ENCODE measurements at regions of chr16 and their contacts with region 1.

Region 1: GRCh38 chr16:87203060-87203656 is 114.0 kb downstream of the C16orf95 start:
- DNase-seq: peak; percentile 84 to 91
- ATAC-seq: peak; percentile 80 to 92
- H3K4me3 ChIP-seq: no peak overlapping the region
- H3K27ac ChIP-seq: peak overlapping the region in 1 of 2 experiments; percentile 69; a peak in 3 of 6 replicates
- H3K4me1 ChIP-seq: peaks cover 30% of the 10 kb centered on the region
- CTCF ChIP-seq: peak; percentile 92
- EP300 ChIP-seq: no peak
- POLR2A ChIP-seq: no peak
- RAD21 ChIP-seq: peak; percentile 73 to 74

Region 2: DNA sequence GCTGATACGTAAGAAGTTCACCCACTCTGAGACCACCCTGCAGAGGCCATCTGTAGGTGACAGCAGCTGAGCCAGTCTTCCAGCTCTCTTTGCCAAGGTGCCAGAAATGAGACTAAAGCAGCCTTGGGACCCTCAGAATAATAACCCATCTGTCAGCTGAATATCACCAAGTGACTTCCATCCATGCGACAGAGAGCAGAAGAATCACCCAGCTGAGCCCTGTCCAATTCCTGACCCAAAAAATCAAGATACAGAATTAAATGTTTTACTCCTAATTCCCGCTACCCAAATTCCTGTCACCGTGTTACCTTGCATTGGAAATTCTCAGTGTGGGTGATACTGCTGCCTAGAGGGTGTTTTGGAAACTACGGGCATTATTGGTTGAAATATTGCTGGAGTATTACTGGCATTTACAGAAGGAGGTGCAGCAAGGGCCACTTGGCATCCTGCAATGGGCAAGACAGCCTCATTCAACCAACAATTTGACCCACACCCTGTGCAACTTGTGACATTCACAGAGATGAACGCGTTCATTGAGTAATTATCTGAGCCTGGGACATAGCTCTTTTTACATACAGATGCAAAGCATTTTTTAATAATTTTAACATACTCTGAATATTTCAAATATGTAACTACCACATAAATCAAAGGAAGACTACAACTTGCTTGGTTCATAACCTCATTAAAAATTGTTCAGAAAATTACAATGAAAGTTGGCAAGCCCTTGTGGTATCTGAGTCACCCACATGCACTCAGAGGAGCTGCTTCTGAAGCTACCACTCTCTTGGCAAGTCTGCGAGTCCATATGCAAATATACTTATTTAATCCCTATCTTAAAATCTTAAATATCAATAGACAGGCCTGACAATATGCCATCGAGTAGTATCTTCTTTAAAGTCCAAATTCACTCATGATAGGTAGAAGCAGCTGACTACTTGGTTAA is 12.6 kb before region 1 on chr16:
- CTCF ChIA-PET with region 1: interaction called, 14 read pairs
- POLR2A ChIA-PET with region 1: no interaction called
- DNase-seq: no peak
- ATAC-seq: no peak
- H3K4me3 ChIP-seq: no peak overlapping the region
- H3K27ac ChIP-seq: no peak overlapping the region
- H3K4me1 ChIP-seq: no peaks in the 10 kb centered on the region
- CTCF ChIP-seq: no peak
- EP300 ChIP-seq: no peak
- POLR2A ChIP-seq: no peak
- RAD21 ChIP-seq: no peak

Region 3: GRCh38 chr16:87288753-87289362 is 85.7 kb after region 1 on chr16:
- CTCF ChIA-PET with region 1: interaction called, 19 read pairs
- POLR2A ChIA-PET with region 1: no interaction called
- DNase-seq: no peak
- ATAC-seq: no peak
- H3K4me3 ChIP-seq: no peak overlapping the region
- H3K27ac ChIP-seq: no peak overlapping the region
- H3K4me1 ChIP-seq: no peaks in the 10 kb centered on the region
- CTCF ChIP-seq: no peak
- EP300 ChIP-seq: no peak
- POLR2A ChIP-seq: no peak
- RAD21 ChIP-seq: no peak

Region 4: GRCh38 chr16:87416826-87417527 is 213.8 kb after region 1 on chr16:
- CTCF ChIA-PET with region 1: no interaction called
- POLR2A ChIA-PET with region 1: no interaction called
- DNase-seq: peak; percentile 15 to 54
- ATAC-seq: peak in 1 of 2 experiments; percentile 62; a peak in 3 of 6 replicates
- H3K4me3 ChIP-seq: no peak overlapping the region
- H3K27ac ChIP-seq: no peak overlapping the region
- H3K4me1 ChIP-seq: no peaks in the 10 kb centered on the region
- CTCF ChIP-seq: peak; percentile 74
- EP300 ChIP-seq: no peak
- POLR2A ChIP-seq: no peak
- RAD21 ChIP-seq: peak; percentile 69 to 72